Gastrocnemius medialis (tissue), 4 donors: ENCODE measurements at regions of chr7 and their contacts with region 1.

Region 1: DNA sequence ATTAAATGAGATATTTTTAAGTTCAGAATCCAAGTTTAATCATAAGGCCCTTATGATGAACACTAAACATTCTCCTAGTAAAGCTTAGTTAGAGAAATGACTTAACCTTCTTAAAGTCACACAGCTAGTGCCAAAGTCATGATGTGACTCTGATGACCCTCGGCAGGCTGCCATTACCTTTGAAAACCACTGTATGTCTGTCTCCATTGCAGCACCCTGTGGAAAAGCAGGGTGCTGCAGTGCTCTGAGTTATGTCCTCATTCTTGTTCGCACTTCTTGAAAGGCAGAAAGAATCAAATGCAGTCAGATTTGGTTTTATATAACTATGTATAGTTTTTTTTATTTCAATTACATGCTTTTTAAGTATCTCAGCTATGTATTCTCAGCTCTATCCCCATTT is 105.0 kb downstream of the PHTF2 start:
- DNase-seq: peak; percentile 41 to 84
- ATAC-seq: peak; percentile 90 to 95
- H3K4me3 ChIP-seq: no peak overlapping the region
- H3K27ac ChIP-seq: peak overlapping the region in 3 of 4 donors; percentile 26 to 41 (median 33)
- H3K4me1 ChIP-seq: peaks cover 0 to 5% of the 10 kb centered on the region in 2 donors
- H3K27me3 ChIP-seq: no peaks in the 10 kb centered on the region
- CTCF ChIP-seq: peak; percentile 27 to 63 (median 39)
- POLR2A ChIP-seq: no peak

Region 2: DNA sequence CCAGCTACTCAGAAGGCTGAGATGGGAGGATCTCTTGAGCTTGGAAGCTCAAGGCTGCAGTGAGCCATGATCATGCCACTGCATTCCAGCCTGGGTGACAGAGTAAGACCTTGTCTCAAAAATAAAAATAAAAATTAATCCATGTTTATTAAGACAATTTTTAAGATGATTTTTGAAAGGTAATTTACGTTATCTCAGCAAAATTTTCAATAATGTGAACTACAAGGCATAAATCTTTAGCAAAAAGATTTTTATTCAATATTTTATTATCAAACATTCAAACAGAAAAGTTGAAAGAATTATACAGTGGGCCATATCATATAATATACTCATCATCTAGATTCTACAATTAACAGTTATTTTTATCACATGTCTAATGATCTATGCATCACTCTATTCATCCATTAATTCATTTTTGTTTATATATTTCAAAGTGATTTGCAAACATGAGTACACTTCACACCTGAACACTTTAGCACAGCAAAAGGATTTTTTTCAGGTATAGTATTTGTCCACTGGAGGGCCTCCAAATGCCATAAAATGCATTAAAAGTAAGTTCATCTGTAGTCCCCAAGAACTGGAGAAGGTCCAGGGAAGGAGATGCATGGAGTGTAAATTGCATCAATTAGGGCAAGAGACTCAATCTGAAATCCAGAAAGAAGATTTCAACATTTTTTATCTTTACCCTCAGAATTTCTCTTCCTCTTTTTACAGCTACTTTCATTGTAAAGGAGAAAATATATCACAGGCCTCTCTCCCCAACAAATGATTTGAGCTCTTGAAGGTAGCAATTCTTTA is 246.0 kb before region 1 on chr7:
- in situ Hi-C with region 1: loop called in 2 of 4 experiments (anchors 10 to 25 kb)
- intact Hi-C with region 1: loop called (anchors 5 kb)
- DNase-seq: no peak
- ATAC-seq: peak in 1 of 2 donors; percentile 74
- H3K4me3 ChIP-seq: no peak overlapping the region
- H3K27ac ChIP-seq: no peak overlapping the region
- H3K4me1 ChIP-seq: no peaks in the 10 kb centered on the region
- H3K27me3 ChIP-seq: no peaks in the 10 kb centered on the region
- CTCF ChIP-seq: peak; percentile 14 to 66 (median 40)
- POLR2A ChIP-seq: no peak

Region 3: GRCh38 chr7:77667459-77668086 is 236.0 kb before region 1 on chr7:
- in situ Hi-C with region 1: loop called in 2 of 4 experiments (anchors 10 to 25 kb)
- intact Hi-C with region 1: no loop called
- DNase-seq: no peak
- ATAC-seq: peak in 1 of 2 donors; percentile 36
- H3K4me3 ChIP-seq: no peak overlapping the region
- H3K27ac ChIP-seq: no peak overlapping the region
- H3K4me1 ChIP-seq: peaks cover 0 to 6% of the 10 kb centered on the region in 2 donors
- H3K27me3 ChIP-seq: no peaks in the 10 kb centered on the region
- CTCF ChIP-seq: no peak
- POLR2A ChIP-seq: no peak